GM13976 (cell line): ENCODE measurements at regions of chr2 and their contacts with region 1.

Region 1: GRCh38 chr2:182186132-182186735 is 200.6 kb downstream of the PPP1R1C start:
- DNase-seq: peak; percentile 4
- CTCF ChIP-seq: peak; percentile 35

Region 2: GRCh38 chr2:182650704-182651103 is 464.5 kb after region 1 on chr2:
- in situ Hi-C with region 1: loop called (anchors 5 kb)
- DNase-seq: no peak
- CTCF ChIP-seq: no peak